GM12878 (cell line): ENCODE measurements at regions of chr2 and their contacts with region 1.

Region 1: GRCh38 chr2:236512902-236513435 is 56.7 kb upstream of the ACKR3 start:
- DNase-seq: peak; percentile 45
- ATAC-seq: peak; percentile 99
- H3K4me3 ChIP-seq: no peak overlapping the region
- H3K27ac ChIP-seq: no peak overlapping the region
- H3K4me1 ChIP-seq: peaks cover 5% of the 10 kb centered on the region
- H3K27me3 ChIP-seq: no peaks in the 10 kb centered on the region; a peak in 1 of 4 replicates
- CTCF ChIP-seq: peak; percentile 90 to 92 (median 90)
- EP300 ChIP-seq: no peak
- POLR2A ChIP-seq: no peak
- RAD21 ChIP-seq: peak; percentile 86

Region 2: DNA sequence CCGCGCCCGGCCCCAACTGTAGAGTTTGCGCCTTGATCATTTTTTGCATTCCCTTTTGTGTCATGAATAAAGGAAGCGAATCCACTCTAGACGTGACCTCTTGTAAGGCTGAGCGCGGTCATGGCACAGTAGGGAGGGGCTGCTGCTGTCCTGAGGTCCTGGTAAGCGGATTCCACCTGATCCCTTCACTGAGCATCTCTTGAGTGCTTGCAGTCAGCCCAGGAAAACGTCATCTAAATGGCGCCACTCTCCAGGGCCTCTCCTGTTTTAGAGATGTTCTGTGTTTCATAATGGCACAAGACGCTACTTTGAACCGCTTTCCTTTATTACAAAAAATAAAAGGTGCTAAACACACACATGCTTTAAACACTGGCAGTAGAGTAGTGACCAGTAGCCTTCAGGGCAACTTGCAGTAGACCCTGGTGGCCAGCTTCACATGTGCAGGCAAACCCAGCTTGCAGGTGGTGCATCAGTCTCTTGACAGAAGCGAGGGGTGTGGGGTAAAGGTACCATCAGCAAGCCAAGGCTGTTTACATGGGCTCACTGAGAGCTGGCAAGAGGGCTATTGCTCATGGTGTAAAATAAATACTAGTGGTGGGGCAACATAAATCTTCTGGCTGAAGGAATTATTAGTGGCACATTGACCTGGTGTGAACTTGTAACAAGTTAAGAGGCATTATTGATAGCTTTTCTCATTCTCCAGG is 13.6 kb after region 1 on chr2:
- CTCF ChIA-PET with region 1: interaction called, 92 read pairs
- POLR2A ChIA-PET with region 1: interaction called, 4 read pairs
- RAD21 ChIA-PET with region 1: interaction called, 40 read pairs
- SMC1A ChIA-PET with region 1: interaction called, 85 read pairs
- in situ Hi-C with region 1: no loop called
- intact Hi-C with region 1: no loop called
- DNase-seq: no peak
- ATAC-seq: no peak
- H3K4me3 ChIP-seq: no peak overlapping the region
- H3K27ac ChIP-seq: no peak overlapping the region
- H3K4me1 ChIP-seq: no peaks in the 10 kb centered on the region
- H3K27me3 ChIP-seq: no peaks in the 10 kb centered on the region
- CTCF ChIP-seq: no peak
- EP300 ChIP-seq: no peak
- POLR2A ChIP-seq: no peak
- RAD21 ChIP-seq: no peak

Region 3: GRCh38 chr2:236545814-236546480 is 33.0 kb after region 1 on chr2:
- CTCF ChIA-PET with region 1: interaction called, 57 read pairs
- POLR2A ChIA-PET with region 1: interaction called, 4 read pairs
- RAD21 ChIA-PET with region 1: interaction called, 22 read pairs
- SMC1A ChIA-PET with region 1: interaction called, 65 read pairs
- in situ Hi-C with region 1: no loop called
- intact Hi-C with region 1: loop called (anchors 2 kb)
- DNase-seq: peak; percentile 89
- ATAC-seq: peak; percentile 75
- H3K4me3 ChIP-seq: no peak overlapping the region; the same call in 1 of the 2 replicates
- H3K27ac ChIP-seq: peak overlapping the region; percentile 89
- H3K4me1 ChIP-seq: peaks cover 54% of the 10 kb centered on the region
- H3K27me3 ChIP-seq: no peaks in the 10 kb centered on the region
- CTCF ChIP-seq: no peak
- EP300 ChIP-seq: peak in 1 of 2 experiments; percentile 7; a peak in 2 of 4 replicates
- POLR2A ChIP-seq: no peak
- RAD21 ChIP-seq: peak; percentile 13; the same call in 1 of the 2 replicates

Region 4: GRCh38 chr2:236558993-236559978 is 46.3 kb after region 1 on chr2:
- CTCF ChIA-PET with region 1: interaction called, 30 read pairs
- POLR2A ChIA-PET with region 1: interaction called, 3 read pairs
- RAD21 ChIA-PET with region 1: interaction called, 16 read pairs
- SMC1A ChIA-PET with region 1: interaction called, 32 read pairs
- in situ Hi-C with region 1: no loop called
- intact Hi-C with region 1: no loop called
- DNase-seq: no peak
- ATAC-seq: peak; percentile 86
- H3K4me3 ChIP-seq: no peak overlapping the region
- H3K27ac ChIP-seq: peak overlapping the region; percentile 74
- H3K4me1 ChIP-seq: peaks cover 29% of the 10 kb centered on the region
- H3K27me3 ChIP-seq: no peaks in the 10 kb centered on the region
- CTCF ChIP-seq: no peak
- EP300 ChIP-seq: peak; percentile 81 to 85; a peak in 3 of 4 replicates
- POLR2A ChIP-seq: no peak
- RAD21 ChIP-seq: 0 out of 2 replicates have a peak, but pooled peaks have one; percentile 6

Region 5: DNA sequence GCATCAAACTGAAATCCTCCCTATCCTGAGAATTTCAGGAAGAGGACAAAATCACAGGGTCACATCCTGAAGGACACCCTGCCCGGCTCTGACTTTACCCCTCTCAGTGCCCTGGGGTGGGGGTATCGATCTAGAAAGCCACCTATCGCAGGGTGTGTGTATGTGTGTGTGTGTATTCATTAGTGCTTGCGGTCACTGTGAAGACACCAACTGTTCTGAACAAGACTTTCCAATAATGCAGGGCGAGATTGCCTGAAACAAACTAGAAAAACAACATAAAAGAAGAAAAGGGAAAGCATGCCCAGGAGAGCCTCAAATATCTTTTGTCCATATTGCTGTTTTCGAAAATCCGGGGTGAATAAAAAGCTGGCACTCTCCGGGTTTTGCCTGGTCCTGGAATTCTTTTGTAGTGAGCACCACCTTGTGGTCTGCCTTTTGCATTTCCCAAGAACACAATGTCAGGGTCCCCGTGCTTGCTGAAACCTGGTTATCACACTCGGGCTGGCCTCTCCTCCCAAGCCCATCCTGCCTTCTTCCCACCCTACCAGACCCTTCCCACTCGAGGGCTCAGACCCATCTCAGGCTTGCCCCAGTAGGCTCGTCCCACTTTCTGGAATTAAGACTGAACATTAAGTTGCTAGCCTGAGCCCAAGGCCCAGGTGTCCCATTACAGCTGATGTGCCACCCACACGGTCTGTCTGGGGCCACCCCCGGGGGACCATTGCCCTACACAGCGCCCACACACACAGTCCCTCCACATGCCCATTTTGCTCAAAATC is 547.8 kb after region 1 on chr2:
- CTCF ChIA-PET with region 1: interaction called, 63 read pairs
- POLR2A ChIA-PET with region 1: interaction called, 3 read pairs
- RAD21 ChIA-PET with region 1: interaction called, 40 read pairs
- SMC1A ChIA-PET with region 1: interaction called, 22 read pairs
- in situ Hi-C with region 1: no loop called
- intact Hi-C with region 1: loop called (anchors 1 kb)
- DNase-seq: no peak
- ATAC-seq: peak; percentile 37
- H3K4me3 ChIP-seq: no peak overlapping the region; the same call in 1 of the 2 replicates
- H3K27ac ChIP-seq: no peak overlapping the region
- H3K4me1 ChIP-seq: peaks cover 38% of the 10 kb centered on the region
- H3K27me3 ChIP-seq: no peaks in the 10 kb centered on the region; a peak in 1 of 4 replicates
- CTCF ChIP-seq: peak; percentile 62 to 84 (median 71); a peak in 5 of 6 replicates
- EP300 ChIP-seq: no peak
- POLR2A ChIP-seq: no peak
- RAD21 ChIP-seq: peak; percentile 86